Esophagus muscularis mucosa (tissue), 4 donors: ENCODE measurements at regions of chr6 and their contacts with region 1.

Region 1: GRCh38 chr6:12137480-12137879 is 125.4 kb downstream of the HIVEP1 start:
- DNase-seq: no peak
- H3K4me3 ChIP-seq: no peak overlapping the region
- H3K27ac ChIP-seq: no peak overlapping the region
- H3K4me1 ChIP-seq: peaks cover 0 to 11% (median 9%) of the 10 kb centered on the region in 4 donors
- H3K27me3 ChIP-seq: no peaks in the 10 kb centered on the region
- CTCF ChIP-seq: no peak
- EP300 ChIP-seq: no peak
- POLR2A ChIP-seq: no peak

Region 2: GRCh38 chr6:12150812-12151432 is 13.4 kb after region 1 on chr6:
- intact Hi-C with region 1: loop called (anchors 2 kb)
- DNase-seq: no peak
- H3K4me3 ChIP-seq: no peak overlapping the region
- H3K27ac ChIP-seq: no peak overlapping the region
- H3K4me1 ChIP-seq: peaks cover 0 to 3% (median 0%) of the 10 kb centered on the region in 4 donors
- H3K27me3 ChIP-seq: no peaks in the 10 kb centered on the region
- CTCF ChIP-seq: peak in 2 of 3 experiments; percentile 25 to 29
- EP300 ChIP-seq: no peak
- POLR2A ChIP-seq: no peak

Region 3: GRCh38 chr6:12174878-12175277 is 37.4 kb after region 1 on chr6:
- intact Hi-C with region 1: no loop called
- DNase-seq: no peak
- H3K4me3 ChIP-seq: no peak overlapping the region
- H3K27ac ChIP-seq: no peak overlapping the region
- H3K4me1 ChIP-seq: no peaks in the 10 kb centered on the region
- H3K27me3 ChIP-seq: no peaks in the 10 kb centered on the region
- CTCF ChIP-seq: no peak
- EP300 ChIP-seq: no peak
- POLR2A ChIP-seq: no peak

Region 4: DNA sequence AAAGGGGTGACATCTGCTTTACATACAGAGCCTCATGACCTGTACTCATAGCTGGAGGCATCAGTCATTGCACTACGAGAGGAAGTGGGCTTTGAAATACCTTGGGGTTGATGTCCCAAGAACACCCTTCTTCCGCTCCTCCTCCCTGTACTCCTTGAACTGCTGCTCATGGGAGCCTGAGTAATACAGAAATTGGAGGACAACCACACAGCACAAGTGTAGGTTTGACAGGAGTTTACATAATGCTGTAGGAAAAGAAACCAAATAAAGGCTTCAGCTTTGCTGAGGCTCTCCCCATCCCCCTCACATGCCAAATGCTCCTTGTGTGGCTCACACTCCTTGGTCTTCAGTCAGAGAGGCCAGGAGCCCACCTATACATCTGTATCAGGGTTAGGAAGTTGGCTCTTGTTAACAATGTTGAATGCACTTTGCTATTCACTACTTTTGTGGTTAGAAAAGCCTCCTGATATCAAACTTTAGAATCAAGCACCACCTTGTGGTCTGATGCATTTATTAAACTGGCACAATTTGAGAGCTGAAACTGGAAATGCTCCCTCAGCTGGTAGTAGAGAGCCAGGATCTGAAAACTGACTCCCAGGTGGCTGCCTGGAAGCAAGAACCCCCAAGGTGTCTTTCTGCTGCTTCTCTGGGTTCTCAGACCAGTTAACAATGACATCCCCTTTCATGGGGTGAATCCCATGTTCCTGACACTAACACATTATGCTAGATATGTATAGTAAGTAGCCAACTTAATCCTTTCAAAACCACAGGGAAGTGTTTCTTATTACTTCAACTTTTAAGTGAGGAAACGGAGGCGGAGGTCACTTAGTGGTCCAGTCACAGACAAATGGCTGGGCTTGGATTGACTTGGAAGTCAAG is 96.5 kb after region 1 on chr6:
- intact Hi-C with region 1: no loop called
- DNase-seq: no peak
- H3K4me3 ChIP-seq: peak overlapping the region in 1 of 4 donors; percentile 12
- H3K27ac ChIP-seq: no peak overlapping the region
- H3K4me1 ChIP-seq: peaks cover 0 to 14% (median 9%) of the 10 kb centered on the region in 4 donors
- H3K27me3 ChIP-seq: peaks cover 0 to 1% (median 0%) of the 10 kb centered on the region in 4 donors
- CTCF ChIP-seq: peak; percentile 68 to 76 (median 76)
- EP300 ChIP-seq: no peak
- POLR2A ChIP-seq: no peak